ENCODE measurements at regions of chr17 and their contacts with region 1.

Region 1: DNA sequence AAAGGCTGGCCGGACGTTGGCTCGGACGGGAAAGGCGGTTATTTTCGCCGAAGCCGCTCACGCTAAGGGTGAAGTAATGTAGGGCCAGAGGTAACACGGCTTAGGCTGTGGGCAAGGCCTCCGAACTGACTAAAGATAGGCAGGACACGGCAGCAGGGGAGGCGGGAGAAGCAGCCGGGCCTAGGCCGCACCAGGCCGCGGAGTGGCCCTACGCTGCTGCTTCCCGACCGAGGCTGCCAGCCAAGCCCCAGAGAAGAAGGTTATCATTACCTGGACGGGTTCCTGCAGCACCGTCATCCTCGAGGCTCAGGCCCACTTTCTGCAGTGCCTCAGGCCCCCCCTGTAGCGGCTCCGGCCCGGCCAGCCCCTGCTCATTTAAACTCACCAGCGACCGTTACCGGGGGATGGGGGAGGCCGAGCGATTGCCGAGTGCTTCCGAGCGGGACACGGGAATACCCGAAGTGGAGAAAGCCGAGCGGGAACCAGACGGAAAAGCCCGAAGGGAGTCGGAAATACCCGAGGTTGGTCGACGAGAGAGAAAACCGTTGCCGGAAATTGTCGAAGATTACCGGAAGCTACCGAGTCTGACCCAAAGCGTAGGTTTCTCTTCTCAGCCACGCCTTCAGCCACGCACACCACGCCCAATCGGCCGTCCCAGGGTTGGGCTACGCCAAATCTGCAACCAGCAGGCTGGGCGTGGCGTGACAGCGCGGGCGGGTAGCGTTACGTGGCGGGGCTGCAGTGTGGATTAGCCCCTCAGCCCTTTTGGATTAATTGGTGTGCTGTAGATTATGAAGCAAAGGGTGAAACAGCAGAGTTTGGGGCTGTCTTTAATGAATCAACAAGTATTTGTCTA is at the start of gene CDC27:
- DNase-seq: peak; percentile 98 to 100
- ATAC-seq: peak; percentile 97 to 98 (median 98)
- H3K4me3 ChIP-seq: peak within 1 kb of the TSS; percentile 54 to 88 (median 71)
- H3K27ac ChIP-seq: peak within 1 kb of the TSS; percentile 88 to 99 (median 96)
- H3K4me1 ChIP-seq: peaks cover 5 to 48% (median 46%) of the 10 kb centered on the region in 9 donors
- H3K27me3 ChIP-seq: no peaks in the 10 kb centered on the region
- CTCF ChIP-seq: no peak
- total RNA-seq, gene CDC27: 73.7 to 103 (median 84.9) TPM

Region 2: DNA sequence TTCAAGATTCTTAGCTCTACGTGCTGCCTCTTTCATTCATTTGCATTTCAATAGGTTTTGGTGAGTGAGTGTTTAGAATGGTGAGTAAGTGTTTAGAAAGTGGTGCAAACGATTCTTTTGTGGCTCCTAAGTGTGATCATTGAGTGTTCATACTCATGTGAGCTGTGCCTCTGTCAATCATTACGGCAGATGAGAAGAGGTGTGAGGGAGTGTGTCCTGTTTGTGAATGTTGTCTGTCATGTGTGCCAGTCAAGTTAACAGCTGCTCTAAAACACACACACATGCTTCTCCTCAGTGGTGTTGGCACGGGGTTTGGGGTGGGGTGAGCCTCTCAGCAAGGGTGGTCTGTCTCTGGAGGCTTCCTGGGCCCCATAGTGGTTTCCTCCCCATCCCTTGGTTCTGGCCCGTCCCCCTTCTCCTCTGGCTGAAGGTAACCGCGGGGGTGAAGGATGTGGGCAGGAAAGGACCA is 31.5 kb after region 1 on chr17:
- intact Hi-C with region 1: loop called in 2 of 10 experiments (anchors 2 to 5 kb)
- DNase-seq: no peak
- ATAC-seq: no peak
- H3K4me3 ChIP-seq: no peak overlapping the region
- H3K27ac ChIP-seq: no peak overlapping the region
- H3K4me1 ChIP-seq: peaks cover 19 to 69% (median 43%) of the 10 kb centered on the region in 9 donors
- H3K27me3 ChIP-seq: no peaks in the 10 kb centered on the region
- CTCF ChIP-seq: no peak

Region 3: DNA sequence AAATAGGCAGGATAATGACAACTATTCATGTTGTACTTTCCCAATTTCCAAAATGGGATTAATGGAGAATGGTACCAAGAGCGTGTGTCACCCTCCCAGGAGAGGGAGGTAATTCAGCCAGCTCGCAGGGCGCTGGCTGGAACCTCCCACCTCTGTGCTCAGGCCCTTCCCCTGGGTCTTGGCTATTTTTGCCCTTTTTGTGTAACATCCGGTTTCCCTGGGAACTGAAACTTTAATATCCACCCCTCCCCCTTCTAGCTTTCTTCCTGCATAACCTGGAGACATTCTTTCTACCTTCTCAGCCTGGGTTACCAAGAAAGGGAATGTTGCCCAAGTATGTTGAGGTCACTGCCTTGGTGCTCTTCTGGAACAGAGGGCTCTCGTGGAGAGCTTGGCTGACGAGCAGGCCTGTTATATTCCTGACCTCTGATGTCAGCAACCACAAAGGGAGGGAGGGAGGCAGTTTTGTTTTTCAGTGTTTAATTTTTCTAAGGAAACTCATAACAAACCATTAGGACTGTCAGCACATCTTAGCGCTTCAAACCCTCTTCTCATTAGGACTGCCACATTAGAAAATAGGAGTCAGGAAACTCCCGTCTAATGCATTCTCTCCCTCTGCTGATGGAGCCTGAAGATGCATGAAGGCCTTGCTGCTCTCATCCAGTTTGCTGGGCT is 90.1 kb after region 1 on chr17:
- intact Hi-C with region 1: loop called in 1 of 10 experiments (anchors 10 kb)
- DNase-seq: peak; percentile 67 to 82
- ATAC-seq: peak; percentile 65 to 82 (median 79)
- H3K4me3 ChIP-seq: peak overlapping the region in 1 of 10 donors; percentile 9
- H3K27ac ChIP-seq: peak overlapping the region; percentile 73 to 92 (median 86)
- H3K4me1 ChIP-seq: peaks cover 40 to 71% (median 57%) of the 10 kb centered on the region in 9 donors
- H3K27me3 ChIP-seq: no peaks in the 10 kb centered on the region
- CTCF ChIP-seq: peak in 2 of 9 donors; percentile 10 to 15